Aorta (tissue), 5 donors: ENCODE measurements at regions of chr2 and their contacts with region 1.

Region 1: DNA sequence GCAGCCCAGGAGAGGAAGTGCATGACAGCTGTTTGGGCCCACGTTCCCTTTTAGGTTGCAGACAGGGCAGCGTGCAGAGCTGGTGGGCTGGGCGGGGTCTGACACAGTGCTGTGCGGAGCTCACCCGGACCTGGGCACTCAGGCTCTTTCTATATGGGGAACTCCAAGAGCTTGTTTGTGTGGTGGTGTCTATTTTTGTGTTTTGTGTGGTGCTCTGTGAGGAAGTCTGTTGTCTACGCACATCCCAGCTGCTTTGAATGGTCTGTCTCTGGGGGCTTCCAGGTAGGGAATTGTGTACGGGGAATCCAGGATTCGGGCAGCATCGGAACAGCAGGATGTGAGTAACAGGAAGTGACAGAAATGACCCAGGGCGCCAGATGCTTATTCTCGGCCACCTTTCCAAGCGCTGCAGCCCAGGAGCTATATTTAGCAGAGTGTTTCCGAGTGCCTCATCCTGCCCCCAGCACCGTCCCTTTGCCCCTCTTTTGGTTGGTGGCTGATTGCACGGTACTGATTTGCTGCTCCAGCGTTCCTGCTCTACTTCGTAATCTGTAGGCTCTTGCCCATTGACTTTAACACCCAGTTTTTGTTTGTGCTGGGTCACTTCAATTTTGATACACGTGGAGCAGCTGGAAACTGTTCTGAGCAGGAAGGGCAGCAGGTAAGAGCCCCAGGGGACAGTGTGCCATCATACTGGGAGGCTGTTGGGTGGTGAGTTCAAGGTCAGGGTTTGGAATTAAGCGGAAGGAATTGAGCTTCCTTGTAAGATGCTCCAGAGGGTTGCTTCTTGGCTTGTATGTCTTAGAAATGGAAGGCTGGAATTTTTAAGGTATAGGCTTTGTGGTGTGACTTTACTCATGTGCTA is 64.7 kb downstream of the DGKD start:
- DNase-seq: peak; percentile 81 to 87
- ATAC-seq: peak; percentile 81
- H3K4me3 ChIP-seq: peak overlapping the region; percentile 54 to 73
- H3K27ac ChIP-seq: peak overlapping the region; percentile 72 to 88
- H3K4me1 ChIP-seq: peaks cover 6 to 10% of the 10 kb centered on the region in 2 donors
- H3K27me3 ChIP-seq: no peaks in the 10 kb centered on the region

Region 2: DNA sequence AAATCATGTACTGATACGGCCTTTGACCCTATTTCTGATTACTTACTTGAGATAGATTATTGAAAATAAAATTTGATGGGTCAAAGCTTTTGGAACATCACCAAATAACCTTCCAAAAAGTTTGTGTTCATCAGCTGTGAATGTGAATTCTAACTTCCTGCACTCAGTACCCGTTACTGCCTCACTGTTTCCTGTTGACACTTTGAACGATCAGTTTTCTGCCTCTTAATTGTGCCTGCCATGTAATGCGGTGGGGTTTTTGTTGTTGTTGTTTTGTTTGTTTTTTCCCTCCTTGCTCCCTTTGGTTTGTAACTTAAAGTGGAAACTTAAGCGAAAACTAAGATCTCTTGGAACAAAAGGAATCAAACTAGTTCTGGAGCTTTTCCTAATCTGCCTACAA is 148.6 kb before region 1 on chr2:
- intact Hi-C with region 1: no loop called
- DNase-seq: no peak
- ATAC-seq: no peak
- H3K4me3 ChIP-seq: no peak overlapping the region
- H3K27ac ChIP-seq: no peak overlapping the region
- H3K4me1 ChIP-seq: no peaks in the 10 kb centered on the region
- H3K27me3 ChIP-seq: no peaks in the 10 kb centered on the region

Region 3: GRCh38 chr2:233486778-233487552 is 68.0 kb after region 1 on chr2:
- intact Hi-C with region 1: loop called in 1 of 2 experiments (anchors 5 kb)
- DNase-seq: peak in 1 of 2 donors; percentile 73
- ATAC-seq: peak; percentile 37
- H3K4me3 ChIP-seq: no peak overlapping the region
- H3K27ac ChIP-seq: peak overlapping the region; percentile 47 to 100
- H3K4me1 ChIP-seq: peaks cover 2 to 8% of the 10 kb centered on the region in 2 donors
- H3K27me3 ChIP-seq: no peaks in the 10 kb centered on the region

Region 4: DNA sequence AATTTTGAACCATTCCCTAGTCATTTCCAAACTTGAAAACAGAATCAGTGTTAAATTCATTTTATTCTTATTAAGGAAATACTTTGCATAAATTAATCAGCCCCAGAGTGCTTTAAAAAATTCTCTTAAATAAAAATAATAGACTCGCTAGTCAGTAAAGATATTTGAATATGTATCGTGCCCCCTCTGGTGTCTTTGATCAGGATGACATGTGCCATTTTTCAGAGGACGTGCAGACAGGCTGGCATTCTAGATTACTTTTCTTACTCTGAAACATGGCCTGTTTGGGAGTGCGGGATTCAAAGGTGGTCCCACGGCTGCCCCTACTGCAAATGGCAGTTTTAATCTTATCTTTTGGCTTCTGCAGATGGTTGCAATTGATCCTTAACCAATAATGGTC is 353.6 kb after region 1 on chr2:
- intact Hi-C with region 1: no loop called
- DNase-seq: no peak
- ATAC-seq: no peak
- H3K4me3 ChIP-seq: no peak overlapping the region
- H3K27ac ChIP-seq: no peak overlapping the region
- H3K4me1 ChIP-seq: no peaks in the 10 kb centered on the region
- H3K27me3 ChIP-seq: no peaks in the 10 kb centered on the region